ENCODE measurements at regions of chr7 and their contacts with region 1.

Region 1: GRCh38 chr7:93055543-93056107 is 62.2 kb downstream of the SAMD9 start:
- H3K4me3 Mint-ChIP-seq: no peak overlapping the region
- H3K27ac Mint-ChIP-seq: no peak overlapping the region
- H3K4me1 Mint-ChIP-seq: peaks cover 8% of the 10 kb centered on the region
- H3K27me3 Mint-ChIP-seq: no peaks in the 10 kb centered on the region

Region 2: GRCh38 chr7:92456236-92456635 is 599.4 kb before region 1 on chr7:
- intact Hi-C with region 1: loop called (anchors 10 kb)
- H3K4me3 Mint-ChIP-seq: no peak overlapping the region
- H3K27ac Mint-ChIP-seq: no peak overlapping the region
- H3K4me1 Mint-ChIP-seq: peaks cover 6% of the 10 kb centered on the region
- H3K27me3 Mint-ChIP-seq: no peaks in the 10 kb centered on the region

Region 3: DNA sequence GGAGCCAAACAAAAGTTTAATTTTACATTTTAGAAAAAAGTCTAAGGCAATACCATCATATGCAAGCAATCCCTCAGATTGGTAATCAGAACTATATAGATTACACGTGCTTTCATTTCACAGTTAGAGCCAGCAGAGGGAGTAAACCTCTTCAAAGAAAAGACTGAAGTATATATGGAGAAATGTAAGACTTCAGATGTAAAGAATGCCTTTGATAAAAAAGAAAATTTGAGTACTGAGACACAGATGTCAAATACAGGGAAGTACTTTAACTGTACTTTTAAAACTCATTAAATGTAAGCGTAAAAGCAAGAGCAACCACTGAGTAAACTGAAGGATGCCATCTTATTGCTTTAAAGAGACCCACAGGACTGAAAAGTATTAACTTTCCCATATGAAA is 364.0 kb before region 1 on chr7:
- intact Hi-C with region 1: loop called (anchors 2 kb)
- H3K4me3 Mint-ChIP-seq: no peak overlapping the region
- H3K27ac Mint-ChIP-seq: no peak overlapping the region
- H3K4me1 Mint-ChIP-seq: peaks cover 13% of the 10 kb centered on the region
- H3K27me3 Mint-ChIP-seq: no peaks in the 10 kb centered on the region

Region 4: GRCh38 chr7:93011351-93012294 is 44.0 kb before region 1 on chr7:
- intact Hi-C with region 1: no loop called
- H3K4me3 Mint-ChIP-seq: no peak overlapping the region
- H3K27ac Mint-ChIP-seq: no peak overlapping the region
- H3K4me1 Mint-ChIP-seq: peaks cover 13% of the 10 kb centered on the region
- H3K27me3 Mint-ChIP-seq: no peaks in the 10 kb centered on the region

Region 5: GRCh38 chr7:93185303-93186027 is 129.8 kb after region 1 on chr7:
- intact Hi-C with region 1: no loop called
- H3K4me3 Mint-ChIP-seq: no peak overlapping the region
- H3K27ac Mint-ChIP-seq: no peak overlapping the region
- H3K4me1 Mint-ChIP-seq: no peaks in the 10 kb centered on the region
- H3K27me3 Mint-ChIP-seq: peaks cover 23% of the 10 kb centered on the region

Measured in dendritic cell treated with granulocyte-macrophage colony-stimulating factor and Interleukin-4, amounts not matched to agents 40 ng/mL and 50 ng/mL, for 4 days (primary cell).